ENCODE measurements at regions of chr20 and their contacts with region 1.

Region 1: DNA sequence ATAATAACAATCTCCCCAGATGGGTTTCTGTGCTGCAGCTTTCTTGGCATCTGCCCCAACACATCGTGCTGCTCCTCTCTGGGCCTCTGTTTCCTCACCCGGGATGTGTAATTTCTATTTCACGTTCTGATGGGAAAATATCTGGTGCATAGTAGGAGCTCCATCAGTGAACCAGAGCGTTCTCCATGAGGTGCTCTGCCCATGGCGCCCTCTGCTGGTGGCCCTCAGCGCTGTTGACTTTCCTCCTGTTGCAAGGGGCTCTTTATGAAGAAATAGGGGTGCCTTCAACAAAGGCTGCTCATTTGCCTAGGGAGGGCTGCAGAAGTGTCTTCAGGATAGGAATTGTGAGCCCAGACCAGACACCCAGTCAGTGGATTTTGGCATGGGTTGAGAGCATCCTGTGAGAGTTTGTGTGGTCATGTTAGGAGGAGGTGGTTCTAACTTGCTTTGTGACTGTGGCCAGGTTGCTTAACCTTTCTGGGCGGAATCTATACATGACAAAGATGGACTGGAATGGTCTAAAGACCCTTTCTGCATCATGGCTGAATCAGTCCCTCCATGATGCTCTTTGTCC is 8.1 kb downstream of the SCRT2 start:
- DNase-seq: peak; percentile 75
- H3K4me3 Mint-ChIP-seq: no peak overlapping the region
- H3K27ac Mint-ChIP-seq: no peak overlapping the region
- H3K4me1 Mint-ChIP-seq: peaks cover 5% of the 10 kb centered on the region
- H3K27me3 Mint-ChIP-seq: peaks cover 55% of the 10 kb centered on the region

Region 2: DNA sequence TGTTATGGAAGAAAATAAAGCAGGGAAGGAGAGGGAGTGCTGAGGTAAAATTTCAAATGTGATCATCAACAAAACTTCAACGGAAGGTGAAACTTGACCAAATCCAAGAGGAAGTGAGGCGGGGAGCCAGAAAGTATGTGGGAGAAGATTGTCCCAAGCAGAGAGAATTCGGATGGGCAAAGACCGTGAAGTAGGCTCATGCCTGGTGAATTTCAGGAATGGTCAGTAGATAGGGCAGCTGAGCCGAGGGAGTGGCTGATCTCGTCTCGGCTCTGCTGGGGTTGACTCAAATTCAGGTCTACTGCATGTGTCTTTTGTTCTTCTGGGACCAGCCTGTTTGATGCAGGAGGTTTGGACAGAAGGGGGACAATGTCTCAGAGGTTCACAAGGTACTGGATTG is 116.9 kb before region 1 on chr20:
- CTCF ChIA-PET with region 1: no interaction called
- POLR2A ChIA-PET with region 1: no interaction called
- intact Hi-C with region 1: no loop called
- DNase-seq: no peak
- H3K4me3 Mint-ChIP-seq: no peak overlapping the region
- H3K27ac Mint-ChIP-seq: no peak overlapping the region
- H3K4me1 Mint-ChIP-seq: no peaks in the 10 kb centered on the region
- H3K27me3 Mint-ChIP-seq: peaks cover 27% of the 10 kb centered on the region

Region 3: DNA sequence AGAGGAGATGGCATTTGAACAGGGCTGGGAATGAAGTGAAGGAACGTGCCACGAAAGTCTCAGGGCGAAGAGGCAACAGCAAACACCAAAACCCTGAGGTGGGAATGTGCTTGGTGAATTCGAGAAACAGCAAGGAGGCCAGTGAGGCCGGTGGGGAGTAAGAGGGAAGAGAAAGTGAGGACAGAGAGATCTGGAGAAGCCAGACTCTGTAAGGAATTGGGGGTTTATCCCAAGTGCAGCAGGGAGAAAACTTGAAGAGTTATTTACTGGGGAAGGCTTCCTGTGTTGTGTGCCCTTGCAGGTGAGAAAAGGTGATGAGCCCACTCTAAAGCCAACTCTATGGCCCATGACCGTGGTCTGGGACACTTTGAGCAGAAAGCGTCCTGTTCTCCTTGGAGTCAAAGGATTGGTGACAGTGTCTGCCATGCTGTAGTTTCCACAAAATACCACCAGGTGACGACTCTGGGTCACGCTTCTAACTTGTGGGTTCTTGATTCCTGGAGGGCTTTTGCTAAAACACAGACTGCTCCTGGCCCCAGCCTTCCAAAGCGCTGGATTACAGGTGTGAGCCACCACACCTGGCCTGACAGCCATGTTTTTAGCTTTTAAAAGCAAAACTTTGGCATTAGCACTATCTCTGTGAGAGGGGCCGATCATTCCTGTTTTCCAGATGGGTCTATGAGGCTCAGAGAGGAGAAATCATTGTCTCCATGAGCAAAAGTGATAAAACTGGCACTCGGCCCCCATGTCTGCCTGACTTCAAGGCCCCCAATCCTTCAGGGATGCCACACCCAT is 105.8 kb before region 1 on chr20:
- CTCF ChIA-PET with region 1: interaction called, 11 read pairs
- POLR2A ChIA-PET with region 1: no interaction called
- intact Hi-C with region 1: no loop called
- DNase-seq: peak; percentile 74
- H3K4me3 Mint-ChIP-seq: no peak overlapping the region
- H3K27ac Mint-ChIP-seq: no peak overlapping the region
- H3K4me1 Mint-ChIP-seq: no peaks in the 10 kb centered on the region
- H3K27me3 Mint-ChIP-seq: peaks cover 13% of the 10 kb centered on the region

Region 4: GRCh38 chr20:577167-577791 is 90.2 kb before region 1 on chr20:
- CTCF ChIA-PET with region 1: no interaction called
- POLR2A ChIA-PET with region 1: no interaction called
- intact Hi-C with region 1: no loop called
- DNase-seq: no peak
- H3K4me3 Mint-ChIP-seq: no peak overlapping the region
- H3K27ac Mint-ChIP-seq: no peak overlapping the region
- H3K4me1 Mint-ChIP-seq: no peaks in the 10 kb centered on the region
- H3K27me3 Mint-ChIP-seq: peaks cover 21% of the 10 kb centered on the region

Region 5: DNA sequence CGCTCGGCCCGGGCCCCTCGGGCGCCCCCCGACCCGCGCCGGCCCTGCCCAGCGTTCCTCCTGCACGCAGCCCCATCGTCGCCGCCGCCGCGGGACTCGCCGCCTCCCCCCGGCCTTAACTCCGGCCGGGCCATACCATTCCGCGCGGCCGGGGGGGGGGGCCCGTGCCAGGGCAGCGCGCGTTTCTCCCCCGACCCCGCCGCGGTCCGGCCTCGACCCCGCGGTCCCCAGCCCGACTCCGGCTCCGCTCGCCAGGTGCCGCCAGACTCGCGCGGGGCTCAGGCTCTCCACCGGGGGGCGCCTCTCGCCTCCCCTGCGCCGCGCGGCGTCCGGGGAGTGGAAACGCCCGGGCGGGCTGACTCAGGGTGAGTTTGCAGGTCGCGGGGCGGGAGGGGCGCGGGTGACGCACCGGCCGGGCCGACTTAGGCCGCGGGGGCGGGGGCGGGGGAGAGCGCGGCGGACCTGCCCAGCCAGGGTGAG is 14.3 kb before region 1 on chr20 and contains the start of gene SRXN1:
- CTCF ChIA-PET with region 1: interaction called, 11 read pairs
- POLR2A ChIA-PET with region 1: interaction called, 3 read pairs
- intact Hi-C with region 1: loop called (anchors 2 kb)
- DNase-seq: peak; percentile 90
- H3K4me3 Mint-ChIP-seq: peak within 1 kb of the TSS; percentile 81
- H3K27ac Mint-ChIP-seq: peak within 1 kb of the TSS; percentile 70
- H3K4me1 Mint-ChIP-seq: peaks cover 26% of the 10 kb centered on the region
- H3K27me3 Mint-ChIP-seq: peaks cover 3% of the 10 kb centered on the region
- total RNA-seq, gene SRXN1: 13.3 to 14.1 TPM

Measured in activated CD4-positive, alpha-beta memory T cell treated with anti-CD3 and anti-CD28 coated beads for 36 hours (primary cell).